ENCODE measurements at regions of chr12 and their contacts with region 1.

Region 1: DNA sequence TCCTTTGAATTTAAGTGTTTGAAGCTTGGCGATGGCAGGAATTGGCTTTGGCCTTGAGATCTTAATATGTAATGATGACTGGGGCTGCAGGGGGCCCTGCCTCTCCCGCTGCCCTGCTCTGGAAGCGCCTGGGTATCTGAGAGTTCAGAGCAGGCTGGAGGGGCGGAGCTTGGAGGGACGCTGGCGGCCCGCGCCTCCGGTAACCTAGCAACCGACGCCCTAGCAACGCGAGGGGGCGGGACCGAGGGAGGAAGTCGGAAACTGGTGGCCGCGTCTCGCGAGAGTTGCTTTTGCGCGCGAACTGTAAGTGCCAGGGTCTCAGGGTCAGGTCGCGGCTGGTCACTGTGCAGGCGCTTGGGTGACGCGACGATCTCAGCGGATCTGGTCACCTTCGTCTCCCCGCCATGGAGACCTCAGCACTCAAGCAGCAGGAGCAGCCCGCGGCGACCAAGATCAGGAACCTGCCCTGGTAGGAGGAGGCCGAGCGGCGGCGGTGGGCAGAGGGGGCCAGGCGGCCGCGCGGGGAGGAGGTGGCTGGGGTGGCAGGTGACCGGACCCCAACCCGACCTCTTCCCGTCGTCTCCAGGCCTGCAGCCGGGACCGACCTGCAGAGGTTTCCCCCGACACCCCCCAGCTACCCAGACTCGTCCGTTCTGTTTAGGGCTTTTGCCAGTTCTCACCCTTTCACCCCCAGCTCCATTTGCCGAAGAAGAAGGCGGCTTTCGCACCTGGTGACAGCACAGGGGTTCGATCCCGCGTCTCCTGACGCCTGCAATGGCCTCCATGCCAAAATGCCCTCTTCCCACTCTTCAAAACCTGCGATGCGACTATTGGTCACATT is at the start of gene RFC5:
- DNase-seq: peak; percentile 99
- ATAC-seq: peak; percentile 98
- H3K4me3 Mint-ChIP-seq: peak within 1 kb of the TSS; percentile 97
- H3K27ac Mint-ChIP-seq: peak within 1 kb of the TSS; percentile 90
- H3K4me1 Mint-ChIP-seq: peaks cover 15% of the 10 kb centered on the region
- H3K27me3 Mint-ChIP-seq: no peaks in the 10 kb centered on the region
- total RNA-seq, gene RFC5: 63.0 to 78.9 TPM

Region 2: GRCh38 chr12:116737774-116738700 is 1278.6 kb before region 1 on chr12 and contains the starts of genes RNFT2 and SPRING1:
- CTCF ChIA-PET with region 1: no interaction called
- POLR2A ChIA-PET with region 1: no interaction called
- intact Hi-C with region 1: loop called in 1 of 2 experiments (anchors 5 kb)
- DNase-seq: peak; percentile 99
- ATAC-seq: peak; percentile 99
- H3K4me3 Mint-ChIP-seq: peak within 1 kb of the TSS; percentile 85
- H3K27ac Mint-ChIP-seq: peak within 1 kb of the TSS; percentile 61
- H3K4me1 Mint-ChIP-seq: peaks cover 22% of the 10 kb centered on the region
- H3K27me3 Mint-ChIP-seq: no peaks in the 10 kb centered on the region
- total RNA-seq, gene RNFT2: 14.7 to 15.0 TPM
- total RNA-seq, gene SPRING1: 15.3 to 17.4 TPM

Region 3: DNA sequence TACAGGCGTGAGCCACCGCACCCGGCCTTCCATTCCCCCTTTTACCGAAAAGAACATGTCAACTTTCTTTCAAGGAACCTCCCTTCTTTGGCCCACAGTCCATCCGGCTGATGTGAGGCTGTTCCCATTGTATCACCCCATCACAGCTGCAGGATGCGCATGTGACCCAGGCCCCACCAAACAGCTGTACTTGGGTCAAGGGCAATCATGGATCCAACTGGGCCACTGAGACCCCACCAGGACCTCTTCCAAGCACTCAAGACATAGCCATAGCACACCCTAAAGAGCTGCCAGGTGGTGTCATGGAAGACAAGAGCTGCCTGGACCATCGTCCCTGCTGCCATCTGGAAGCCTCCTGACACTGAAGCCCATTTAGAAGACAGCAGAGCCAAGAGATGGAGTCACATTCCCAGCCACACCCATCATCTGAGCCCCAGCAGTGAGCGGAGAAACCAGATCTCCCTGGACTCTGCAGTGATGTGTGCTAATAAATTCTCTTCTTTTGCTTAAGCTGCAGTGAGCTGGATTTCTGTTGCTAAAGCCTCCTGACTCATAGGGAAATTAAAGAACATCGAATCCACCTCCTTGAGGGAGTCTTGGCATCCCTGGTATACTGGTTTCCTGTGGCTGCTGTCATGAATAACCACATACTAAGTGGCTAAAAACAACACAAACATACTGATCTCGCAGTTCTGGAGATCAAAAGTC is 153.5 kb before region 1 on chr12:
- CTCF ChIA-PET with region 1: no interaction called
- POLR2A ChIA-PET with region 1: no interaction called
- intact Hi-C with region 1: no loop called
- DNase-seq: no peak
- ATAC-seq: no peak
- H3K4me3 Mint-ChIP-seq: no peak overlapping the region
- H3K27ac Mint-ChIP-seq: no peak overlapping the region
- H3K4me1 Mint-ChIP-seq: no peaks in the 10 kb centered on the region
- H3K27me3 Mint-ChIP-seq: peaks cover 7% of the 10 kb centered on the region

Region 4: DNA sequence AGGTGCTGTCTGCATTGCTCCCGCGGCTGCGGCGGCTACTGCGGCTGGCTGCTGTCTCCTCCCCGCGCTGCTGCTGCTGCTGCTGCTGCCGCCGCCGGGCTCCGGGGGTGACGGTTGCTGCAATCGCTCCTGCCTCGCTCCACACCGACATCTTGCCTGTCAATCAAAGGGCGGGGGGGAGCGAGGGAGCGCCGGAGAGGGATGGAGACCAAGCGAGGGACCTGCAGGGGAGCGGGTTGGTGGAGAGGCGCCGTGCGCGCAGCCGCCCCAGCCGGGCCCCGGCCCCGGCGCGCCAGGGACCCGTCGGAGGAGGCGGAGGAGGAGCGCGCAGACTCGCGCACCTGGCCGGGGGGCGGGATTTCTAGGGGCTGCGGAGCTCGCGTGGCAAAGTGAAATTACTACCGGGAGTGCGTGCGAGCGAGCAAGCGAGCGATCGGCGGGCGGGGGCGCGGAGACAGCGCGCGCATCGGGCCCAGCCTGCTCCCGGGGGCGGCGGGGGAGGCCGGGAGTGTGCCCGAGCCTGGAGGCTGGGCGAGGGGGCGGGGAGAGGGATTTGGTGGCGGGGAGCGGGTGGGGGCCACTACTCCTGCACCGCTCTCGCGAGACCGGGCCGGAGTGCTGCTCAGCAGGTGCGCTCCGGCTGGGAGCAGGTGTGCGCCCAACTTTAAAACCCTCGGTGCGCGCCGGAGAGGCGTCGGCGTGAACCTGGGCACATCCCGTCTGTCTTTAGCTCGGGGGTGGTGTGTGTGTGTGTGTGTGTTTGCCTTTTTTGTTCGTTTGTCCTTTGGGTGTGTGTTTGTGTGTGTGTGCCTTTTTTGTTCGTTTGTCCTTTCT is 47.6 kb before region 1 on chr12 and contains the start of gene KSR2:
- CTCF ChIA-PET with region 1: interaction called, 3 read pairs
- POLR2A ChIA-PET with region 1: no interaction called
- intact Hi-C with region 1: loop called (anchors 1 to 2 kb)
- DNase-seq: peak; percentile 81
- ATAC-seq: peak; percentile 88
- H3K4me3 Mint-ChIP-seq: peak within 1 kb of the TSS; percentile 74
- H3K27ac Mint-ChIP-seq: peak within 1 kb of the TSS; percentile 26
- H3K4me1 Mint-ChIP-seq: peaks cover 9% of the 10 kb centered on the region
- H3K27me3 Mint-ChIP-seq: peaks cover 57% of the 10 kb centered on the region
- total RNA-seq, gene KSR2: 0.14 to 0.16 TPM

Region 5: GRCh38 chr12:118044075-118044474 is 27.4 kb after region 1 on chr12:
- CTCF ChIA-PET with region 1: interaction called, 4 read pairs
- POLR2A ChIA-PET with region 1: interaction called, 10 read pairs
- intact Hi-C with region 1: loop called in 1 of 2 experiments (anchors 1 kb)
- DNase-seq: peak; percentile 51
- ATAC-seq: peak; percentile 67
- H3K4me3 Mint-ChIP-seq: peak overlapping the region; percentile 33
- H3K27ac Mint-ChIP-seq: peak overlapping the region; percentile 97
- H3K4me1 Mint-ChIP-seq: peaks cover 53% of the 10 kb centered on the region
- H3K27me3 Mint-ChIP-seq: no peaks in the 10 kb centered on the region

Region 6: GRCh38 chr12:118135788-118136558 is 119.3 kb after region 1 on chr12 and contains the start of gene PEBP1:
- CTCF ChIA-PET with region 1: interaction called, 7 read pairs
- POLR2A ChIA-PET with region 1: no interaction called
- intact Hi-C with region 1: loop called in 1 of 2 experiments (anchors 1 kb)
- DNase-seq: peak; percentile 97
- ATAC-seq: peak; percentile 99
- H3K4me3 Mint-ChIP-seq: peak within 1 kb of the TSS; percentile 88
- H3K27ac Mint-ChIP-seq: peak within 1 kb of the TSS; percentile 91
- H3K4me1 Mint-ChIP-seq: peaks cover 33% of the 10 kb centered on the region
- H3K27me3 Mint-ChIP-seq: no peaks in the 10 kb centered on the region
- total RNA-seq, gene PEBP1: 117 to 134 TPM